HEK293 (cell line): ENCODE measurements at regions of chr11 and their contacts with region 1.

Region 1: GRCh38 chr11:10770626-10771254 is 19.7 kb downstream of the CTR9 start:
- H3K4me3 ChIP-seq: no peak overlapping the region
- H3K27ac ChIP-seq: no peak overlapping the region
- H3K4me1 ChIP-seq: no peaks in the 10 kb centered on the region
- CTCF ChIP-seq: no peak

Region 2: GRCh38 chr11:10784232-10785145 is 13.7 kb after region 1 on chr11:
- CTCF ChIA-PET with region 1: interaction called, 13 read pairs
- POLR2A ChIA-PET with region 1: no interaction called
- H3K4me3 ChIP-seq: no peak overlapping the region
- H3K27ac ChIP-seq: no peak overlapping the region
- H3K4me1 ChIP-seq: 0 out of 2 replicates have a peak, but pooled peaks cover 2% of the 10 kb centered on the region
- CTCF ChIP-seq: no peak

Region 3: DNA sequence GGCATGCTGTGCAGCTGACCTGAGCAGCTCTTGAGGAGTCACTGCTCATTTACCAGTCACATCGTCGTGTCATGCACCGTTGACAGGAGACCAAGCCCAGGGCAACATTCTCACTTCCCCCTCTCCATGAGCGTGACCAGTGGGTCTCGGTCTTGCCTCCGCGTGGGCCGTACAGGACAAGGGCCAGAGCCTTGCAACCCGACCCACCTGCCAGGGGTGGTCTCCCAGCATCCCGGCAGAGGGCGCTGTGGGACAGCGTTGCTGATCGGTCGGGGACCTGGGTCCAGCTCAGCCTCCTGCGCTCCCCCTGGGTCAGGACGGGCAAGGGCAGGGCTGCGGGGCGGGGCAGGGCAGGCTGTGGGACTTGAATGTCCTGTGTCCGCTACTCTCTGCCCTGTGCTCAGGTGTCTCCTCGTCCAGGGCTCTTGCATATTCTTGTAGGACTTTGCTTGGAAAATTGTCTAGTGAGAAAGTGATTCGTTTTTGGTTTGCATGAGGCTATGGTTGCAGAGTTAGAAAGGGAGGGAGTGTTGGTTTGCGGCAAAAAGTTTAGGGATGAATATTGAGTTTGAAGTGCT is 21.7 kb after region 1 on chr11:
- CTCF ChIA-PET with region 1: interaction called, 28 read pairs
- POLR2A ChIA-PET with region 1: interaction called, 3 read pairs
- H3K4me3 ChIP-seq: no peak overlapping the region
- H3K27ac ChIP-seq: no peak overlapping the region
- H3K4me1 ChIP-seq: no peaks in the 10 kb centered on the region
- CTCF ChIP-seq: peak; percentile 90

Region 4: GRCh38 chr11:11022125-11022730 is 251.5 kb after region 1 on chr11:
- CTCF ChIA-PET with region 1: interaction called, 10 read pairs
- POLR2A ChIA-PET with region 1: no interaction called
- H3K4me3 ChIP-seq: no peak overlapping the region
- H3K27ac ChIP-seq: no peak overlapping the region
- H3K4me1 ChIP-seq: no peaks in the 10 kb centered on the region
- CTCF ChIP-seq: no peak